ENCODE measurements at regions of chr19 and their contacts with region 1.

Region 1: GRCh38 chr19:1672038-1672768 is 19.8 kb upstream of the TCF3 start:
- DNase-seq: no peak
- ATAC-seq: peak in 3 of 4 donors; percentile 53 to 72 (median 58)
- H3K4me3 ChIP-seq: peak overlapping the region; percentile 22
- H3K27ac ChIP-seq: no peak overlapping the region
- H3K4me1 ChIP-seq: peaks cover 8% of the 10 kb centered on the region
- H3K27me3 ChIP-seq: peaks cover 0 to 87% (median 32%) of the 10 kb centered on the region in 3 donors
- CTCF ChIP-seq: peak; percentile 71

Region 2: DNA sequence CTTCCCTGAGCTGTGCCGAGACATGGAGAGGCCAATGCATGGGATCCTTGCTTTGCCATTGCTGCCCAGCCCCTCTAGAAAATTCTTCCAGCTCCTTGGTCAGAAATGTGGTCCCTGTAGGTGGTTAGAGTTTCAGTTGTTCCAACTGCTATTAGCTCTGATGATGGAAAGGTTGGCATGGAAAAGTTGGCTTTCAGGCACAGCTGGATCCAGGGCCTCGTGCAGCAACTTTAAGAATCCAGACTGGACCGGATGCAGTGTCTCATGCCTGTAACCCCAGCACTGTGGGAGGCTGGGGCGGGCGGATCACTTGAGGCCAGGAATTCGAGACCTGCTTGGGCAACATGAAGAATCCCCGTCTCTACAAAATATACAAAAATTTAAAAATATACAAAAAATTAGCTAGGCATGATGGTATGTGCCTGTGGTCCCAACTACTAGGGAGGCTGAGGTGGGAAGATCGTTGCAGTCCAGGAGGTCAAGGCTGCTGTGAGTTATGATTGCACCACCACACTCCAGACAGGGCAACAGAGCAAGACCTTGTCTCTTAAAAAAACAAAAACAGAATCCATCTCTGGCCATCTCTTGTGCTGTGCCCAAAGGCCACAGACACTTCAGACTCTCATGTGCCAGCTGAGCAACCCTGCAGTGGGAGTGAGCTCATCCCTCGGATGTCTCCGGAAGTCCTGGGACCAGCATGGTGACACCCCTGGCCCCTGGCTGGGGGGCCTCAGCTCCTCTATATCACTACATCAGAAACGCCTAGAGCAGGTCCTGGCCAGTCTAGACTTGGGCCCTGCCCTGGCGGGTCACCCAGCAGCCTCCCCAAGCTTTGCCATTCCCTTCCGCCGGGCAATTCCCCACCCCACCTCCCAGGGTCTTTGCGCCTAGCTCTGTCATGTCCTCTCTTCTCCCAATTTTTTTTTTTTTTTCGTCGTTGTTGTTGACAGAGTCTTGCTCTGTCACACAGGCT is 120.8 kb before region 1 on chr19:
- intact Hi-C with region 1: loop called (anchors 2 to 5 kb)
- DNase-seq: no peak
- ATAC-seq: no peak
- H3K4me3 ChIP-seq: no peak overlapping the region
- H3K27ac ChIP-seq: no peak overlapping the region
- H3K4me1 ChIP-seq: no peaks in the 10 kb centered on the region
- H3K27me3 ChIP-seq: no peaks in the 10 kb centered on the region
- CTCF ChIP-seq: no peak

Region 3: GRCh38 chr19:1655131-1655981 is 16.8 kb before region 1 on chr19:
- intact Hi-C with region 1: no loop called
- DNase-seq: no peak
- ATAC-seq: no peak
- H3K4me3 ChIP-seq: no peak overlapping the region
- H3K27ac ChIP-seq: no peak overlapping the region
- H3K4me1 ChIP-seq: peaks cover 11% of the 10 kb centered on the region
- H3K27me3 ChIP-seq: peaks cover 0 to 13% (median 3%) of the 10 kb centered on the region in 3 donors
- CTCF ChIP-seq: no peak

Region 4: GRCh38 chr19:1780272-1780958 is 108.2 kb after region 1 on chr19:
- intact Hi-C with region 1: loop called in 1 of 2 experiments (anchors 10 kb)
- DNase-seq: no peak
- ATAC-seq: no peak
- H3K4me3 ChIP-seq: no peak overlapping the region
- H3K27ac ChIP-seq: no peak overlapping the region
- H3K4me1 ChIP-seq: no peaks in the 10 kb centered on the region
- H3K27me3 ChIP-seq: peaks cover 0 to 87% (median 48%) of the 10 kb centered on the region in 3 donors
- CTCF ChIP-seq: no peak

Region 5: DNA sequence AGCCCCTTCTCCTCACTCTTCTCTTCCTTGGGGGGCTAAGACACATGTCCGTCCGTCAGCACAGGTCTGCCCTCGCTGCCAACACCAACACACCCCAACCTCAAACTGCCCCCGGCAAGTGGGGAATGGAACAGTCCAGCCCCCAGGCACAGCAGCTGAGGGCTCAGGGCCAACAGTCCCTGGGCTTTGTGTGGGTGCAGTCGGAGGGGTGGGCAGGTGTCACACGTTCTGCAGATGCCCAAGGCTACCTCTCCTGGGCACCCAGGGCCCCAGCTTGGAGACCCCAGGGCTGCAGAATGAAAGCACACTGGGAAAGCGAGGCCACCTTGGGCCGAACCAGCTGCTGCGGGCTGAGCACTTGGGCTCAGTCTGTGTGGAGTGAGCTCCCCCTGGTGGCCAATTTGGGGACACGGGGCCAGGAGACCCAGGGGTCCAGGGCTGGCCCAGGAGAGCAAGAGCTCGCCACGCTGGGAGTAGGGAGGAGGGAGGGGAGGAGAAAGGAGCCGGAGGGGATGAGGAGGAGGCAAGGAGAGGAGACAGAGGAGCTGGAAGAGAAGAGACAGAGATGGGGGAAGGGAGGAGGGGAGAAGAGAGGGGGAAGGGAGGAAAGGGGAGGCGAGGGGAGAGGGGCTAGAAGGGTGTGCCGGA is 153.8 kb after region 1 on chr19:
- intact Hi-C with region 1: loop called in 1 of 2 experiments (anchors 5 kb)
- DNase-seq: peak; percentile 75 to 89
- ATAC-seq: peak; percentile 64 to 89 (median 81)
- H3K4me3 ChIP-seq: no peak overlapping the region
- H3K27ac ChIP-seq: no peak overlapping the region
- H3K4me1 ChIP-seq: peaks cover 5% of the 10 kb centered on the region
- H3K27me3 ChIP-seq: no peaks in the 10 kb centered on the region
- CTCF ChIP-seq: peak; percentile 81